ENCODE measurements at regions of chr10 and their contacts with region 1.

Region 1: DNA sequence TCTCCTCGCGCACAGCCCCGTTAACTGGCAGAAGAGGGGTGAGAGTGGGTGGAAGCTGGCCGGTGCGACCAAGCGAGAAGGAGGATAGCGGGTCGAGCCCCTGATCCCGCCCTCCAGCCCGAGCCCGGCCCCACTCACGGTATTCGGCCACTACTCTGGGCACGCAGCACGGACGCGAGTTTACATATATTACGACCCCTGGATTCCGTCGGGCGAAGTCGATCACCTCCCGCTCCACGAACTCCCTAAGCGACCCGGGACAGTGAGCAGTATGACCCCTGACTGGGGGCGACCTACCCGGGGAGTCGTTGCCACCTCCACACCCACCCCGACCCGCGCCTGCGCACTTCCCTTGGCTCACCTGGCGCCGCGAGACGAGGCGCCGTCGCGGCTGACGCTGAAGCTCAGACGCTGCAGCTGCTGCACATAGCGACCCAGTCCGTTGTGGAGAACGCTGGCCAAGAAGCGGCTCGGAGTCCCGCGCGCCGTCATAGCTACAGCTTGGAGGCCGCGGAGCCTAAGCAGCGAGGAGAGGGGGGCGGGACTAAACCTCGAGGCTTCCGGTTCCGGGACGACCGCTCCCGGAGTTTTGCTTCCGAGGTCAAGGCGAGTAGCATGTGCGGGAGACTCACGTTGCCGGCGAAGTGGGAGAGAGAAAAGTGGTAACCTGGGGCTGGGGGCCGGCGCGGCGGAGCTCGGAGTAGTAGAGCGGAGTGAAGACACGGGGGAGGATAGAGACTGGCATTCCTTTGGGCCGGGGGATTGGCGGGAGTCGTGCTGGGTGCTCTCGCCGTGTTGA is at the starts of genes MRPL43 and TWNK:
- DNase-seq: peak; percentile 91
- ATAC-seq: peak; percentile 93
- H3K4me3 ChIP-seq: peak within 1 kb of the TSS; percentile 68 to 95 (median 94)
- H3K4me3 Mint-ChIP-seq: peak within 1 kb of the TSS; percentile 97
- H3K27ac ChIP-seq: peak within 1 kb of the TSS; percentile 15 to 51
- H3K27ac Mint-ChIP-seq: peak within 1 kb of the TSS; percentile 84
- H3K4me1 ChIP-seq: peaks cover 18 to 28% of the 10 kb centered on the region in 2 donors
- H3K4me1 Mint-ChIP-seq: peaks cover 36% of the 10 kb centered on the region
- H3K27me3 ChIP-seq: no peaks in the 10 kb centered on the region
- H3K27me3 Mint-ChIP-seq: no peaks in the 10 kb centered on the region
- CTCF ChIP-seq: no peak
- total RNA-seq, gene MRPL43: 56.2 and 57.8 TPM in 2 replicates
- total RNA-seq, gene TWNK: 11.8 and 12.0 TPM in 2 replicates

Region 2: GRCh38 chr10:100286051-100287033 is 700.8 kb before region 1 on chr10 and contains the start of gene BLOC1S2:
- CTCF ChIA-PET with region 1: no interaction called
- POLR2A ChIA-PET with region 1: no interaction called
- intact Hi-C with region 1: loop called (anchors 2 kb)
- DNase-seq: peak; percentile 91
- ATAC-seq: peak; percentile 90
- H3K4me3 ChIP-seq: peak within 1 kb of the TSS; percentile 69 to 100 (median 99)
- H3K4me3 Mint-ChIP-seq: peak within 1 kb of the TSS; percentile 98
- H3K27ac ChIP-seq: peak within 1 kb of the TSS; percentile 92 to 96
- H3K27ac Mint-ChIP-seq: peak within 1 kb of the TSS; percentile 96
- H3K4me1 ChIP-seq: peaks cover 48 to 53% of the 10 kb centered on the region in 2 donors
- H3K4me1 Mint-ChIP-seq: peaks cover 35% of the 10 kb centered on the region
- H3K27me3 ChIP-seq: no peaks in the 10 kb centered on the region
- H3K27me3 Mint-ChIP-seq: peaks cover 1% of the 10 kb centered on the region
- CTCF ChIP-seq: no peak
- total RNA-seq, gene BLOC1S2: 47.2 and 47.5 TPM in 2 replicates

Region 3: GRCh38 chr10:100969187-100970075 is 17.7 kb before region 1 on chr10 and contains the start of gene SEMA4G:
- CTCF ChIA-PET with region 1: interaction called, 6 read pairs
- POLR2A ChIA-PET with region 1: no interaction called
- intact Hi-C with region 1: loop called (anchors 2 kb)
- DNase-seq: peak; percentile 74
- ATAC-seq: peak; percentile 84
- H3K4me3 ChIP-seq: peak within 1 kb of the TSS in 4 of 5 experiments; percentile 43 to 67 (median 56)
- H3K4me3 Mint-ChIP-seq: peak within 1 kb of the TSS; percentile 63
- H3K27ac ChIP-seq: no peak within 1 kb of the TSS
- H3K27ac Mint-ChIP-seq: no peak within 1 kb of the TSS
- H3K4me1 ChIP-seq: peaks cover 13 to 17% of the 10 kb centered on the region in 2 donors
- H3K4me1 Mint-ChIP-seq: peaks cover 16% of the 10 kb centered on the region
- H3K27me3 ChIP-seq: no peaks in the 10 kb centered on the region
- H3K27me3 Mint-ChIP-seq: no peaks in the 10 kb centered on the region
- CTCF ChIP-seq: peak; percentile 78
- total RNA-seq, gene SEMA4G: 0.96 and 2.2 TPM in 2 replicates

Region 4: DNA sequence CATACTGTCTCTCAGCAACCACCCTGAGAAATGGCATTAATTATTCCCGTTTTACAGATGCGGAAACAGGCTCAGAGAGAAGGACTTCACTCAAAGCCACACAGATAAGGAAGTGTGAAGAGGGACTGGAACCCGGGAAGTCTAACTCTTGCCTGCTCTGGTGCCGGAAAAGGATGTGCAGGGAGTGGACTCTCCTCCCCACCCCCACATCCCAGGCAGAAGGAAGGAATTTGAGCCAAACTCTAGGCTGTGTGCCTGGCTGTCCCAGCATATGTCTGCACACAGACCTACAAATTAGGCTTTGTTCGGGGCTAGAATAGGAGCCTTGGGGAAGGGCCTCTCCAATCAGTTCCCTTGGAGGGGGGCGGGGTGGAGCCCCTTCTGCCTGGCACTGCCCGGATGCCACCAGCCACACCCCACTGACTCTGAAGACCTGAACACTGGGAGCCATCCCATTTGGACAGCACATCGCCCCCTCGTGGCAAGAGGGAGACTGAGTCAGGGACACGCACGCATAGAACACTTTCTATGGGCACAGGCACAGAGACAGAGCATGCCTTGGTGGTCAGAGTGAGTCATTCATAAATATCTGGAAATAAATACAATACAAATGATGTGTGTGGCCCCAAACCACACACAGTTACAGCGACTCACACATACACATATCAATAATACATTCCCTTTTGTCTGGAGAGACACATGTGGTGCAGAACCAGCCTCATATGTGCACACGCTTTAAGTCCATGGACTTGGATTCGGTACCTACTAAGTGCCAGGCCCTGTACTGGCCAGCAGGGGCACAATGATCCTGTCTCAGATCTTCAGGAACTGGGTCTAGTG is 25.6 kb after region 1 on chr10:
- CTCF ChIA-PET with region 1: interaction called, 28 read pairs
- POLR2A ChIA-PET with region 1: interaction called, 7 read pairs
- intact Hi-C with region 1: no loop called
- DNase-seq: peak; percentile 77
- ATAC-seq: peak; percentile 86
- H3K4me3 ChIP-seq: no peak overlapping the region
- H3K4me3 Mint-ChIP-seq: no peak overlapping the region
- H3K27ac ChIP-seq: no peak overlapping the region
- H3K27ac Mint-ChIP-seq: no peak overlapping the region
- H3K4me1 ChIP-seq: peaks cover 8 to 14% of the 10 kb centered on the region in 2 donors
- H3K4me1 Mint-ChIP-seq: peaks cover 16% of the 10 kb centered on the region
- H3K27me3 ChIP-seq: peaks cover 0 to 32% (median 18%) of the 10 kb centered on the region in 4 experiments
- H3K27me3 Mint-ChIP-seq: peaks cover 27% of the 10 kb centered on the region
- CTCF ChIP-seq: peak; percentile 83

Measured in B cell (primary cell).